ENCODE measurements at regions of chr12 and their contacts with region 1.

Region 1: GRCh38 chr12:111753144-111753881 is 13.4 kb upstream of the ALDH2 start:
- H3K4me3 Mint-ChIP-seq: no peak overlapping the region
- H3K27ac Mint-ChIP-seq: no peak overlapping the region
- H3K4me1 Mint-ChIP-seq: peaks cover 15% of the 10 kb centered on the region
- H3K27me3 Mint-ChIP-seq: no peaks in the 10 kb centered on the region

Region 2: DNA sequence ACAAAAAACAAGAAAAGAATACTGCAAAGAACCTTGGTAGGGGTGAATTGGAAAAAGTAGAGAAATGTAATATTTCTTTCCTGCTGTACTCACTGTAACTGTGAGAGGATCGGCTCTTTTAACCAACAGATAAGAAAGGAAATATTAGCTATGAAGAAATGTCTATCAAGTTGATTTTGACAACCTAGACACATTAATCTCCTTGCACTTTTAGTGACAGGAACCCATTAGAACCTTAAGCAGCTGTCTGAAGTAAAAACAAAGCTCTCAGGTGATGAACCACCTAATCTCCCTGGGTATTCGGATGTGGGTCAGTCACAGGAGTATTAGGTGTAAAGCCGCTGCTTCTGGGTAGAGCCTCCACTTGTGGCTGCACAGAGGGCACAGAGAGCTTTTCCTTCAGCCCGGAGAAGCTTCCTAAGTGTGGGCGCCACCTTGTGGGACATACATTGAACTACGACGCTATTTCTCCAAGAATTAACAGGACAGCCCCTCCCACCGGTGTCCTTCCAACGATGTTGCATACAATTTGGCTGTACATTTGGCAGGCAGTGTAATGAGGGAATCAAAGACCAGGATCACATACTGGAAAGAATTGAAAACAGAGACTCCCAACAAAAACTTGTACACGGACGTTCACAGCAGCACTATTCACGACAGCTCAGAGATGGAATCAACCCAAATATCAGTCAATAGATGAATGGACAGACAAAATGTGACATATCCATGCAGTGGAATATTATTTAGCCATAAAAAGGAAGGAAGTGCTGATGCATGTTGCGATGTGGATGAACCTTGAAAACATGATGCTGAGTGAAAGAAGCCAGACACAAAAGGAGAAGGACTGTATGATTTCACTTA is 59.8 kb after region 1 on chr12:
- intact Hi-C with region 1: loop called (anchors 1 kb)
- H3K4me3 Mint-ChIP-seq: no peak overlapping the region
- H3K27ac Mint-ChIP-seq: peak overlapping the region; percentile 8
- H3K4me1 Mint-ChIP-seq: peaks cover 10% of the 10 kb centered on the region
- H3K27me3 Mint-ChIP-seq: no peaks in the 10 kb centered on the region

Region 3: GRCh38 chr12:112148031-112148513 is 394.8 kb after region 1 on chr12:
- intact Hi-C with region 1: no loop called
- H3K4me3 Mint-ChIP-seq: no peak overlapping the region
- H3K27ac Mint-ChIP-seq: no peak overlapping the region
- H3K4me1 Mint-ChIP-seq: peaks cover 16% of the 10 kb centered on the region
- H3K27me3 Mint-ChIP-seq: no peaks in the 10 kb centered on the region

Measured in dendritic cell treated with granulocyte-macrophage colony-stimulating factor and Interleukin-4, amounts not matched to agents 40 ng/mL and 50 ng/mL, for 4 days (primary cell).